Sigmoid colon (tissue), 7 donors: ENCODE measurements at regions of chr15 and their contacts with region 1.

Region 1: GRCh38 chr15:64681424-64682024 is 93.9 kb downstream of the RBPMS2 start:
- DNase-seq: no peak
- H3K4me3 ChIP-seq: no peak overlapping the region
- H3K27ac ChIP-seq: peak overlapping the region in 2 of 4 donors; percentile 3 to 27
- H3K4me1 ChIP-seq: peaks cover 0 to 15% (median 2%) of the 10 kb centered on the region in 4 donors
- H3K27me3 ChIP-seq: no peaks in the 10 kb centered on the region
- CTCF ChIP-seq: peak; percentile 41 to 85 (median 78)
- EP300 ChIP-seq: no peak
- POLR2A ChIP-seq: no peak

Region 2: GRCh38 chr15:64426845-64427465 is 254.6 kb before region 1 on chr15:
- intact Hi-C with region 1: loop called (anchors 2 kb)
- DNase-seq: no peak
- H3K4me3 ChIP-seq: no peak overlapping the region
- H3K27ac ChIP-seq: no peak overlapping the region
- H3K4me1 ChIP-seq: peaks cover 0 to 16% (median 5%) of the 10 kb centered on the region in 4 donors
- H3K27me3 ChIP-seq: no peaks in the 10 kb centered on the region
- CTCF ChIP-seq: peak in 2 of 4 experiments; percentile 10 to 23
- EP300 ChIP-seq: no peak
- POLR2A ChIP-seq: no peak